ENCODE measurements at regions of chr22 and their contacts with region 1.

Region 1: GRCh38 chr22:23315341-23315917 is 135.1 kb downstream of the BCR start:
- DNase-seq: peak; percentile 23
- ATAC-seq: peak; percentile 71
- H3K4me3 ChIP-seq: no peak overlapping the region
- H3K27ac ChIP-seq: no peak overlapping the region
- H3K4me1 ChIP-seq: no peaks in the 10 kb centered on the region
- H3K27me3 ChIP-seq: no peaks in the 10 kb centered on the region
- CTCF ChIP-seq: peak; percentile 49 to 62 (median 58); a peak in 5 of 6 replicates
- POLR2A ChIP-seq: no peak
- RAD21 ChIP-seq: peak; percentile 63

Region 2: GRCh38 chr22:23385291-23386244 is 70.1 kb after region 1 on chr22:
- CTCF ChIA-PET with region 1: interaction called, 12 read pairs
- POLR2A ChIA-PET with region 1: no interaction called
- RAD21 ChIA-PET with region 1: interaction called in 1 of 2 experiments, 3 read pairs
- intact Hi-C with region 1: loop called (anchors 1 kb)
- DNase-seq: peak; percentile 61
- ATAC-seq: peak; percentile 95
- H3K4me3 ChIP-seq: no peak overlapping the region
- H3K27ac ChIP-seq: no peak overlapping the region; the same call in 1 of the 2 replicates
- H3K4me1 ChIP-seq: no peaks in the 10 kb centered on the region
- H3K27me3 ChIP-seq: no peaks in the 10 kb centered on the region
- CTCF ChIP-seq: peak; percentile 94 to 98 (median 96)
- POLR2A ChIP-seq: no peak
- RAD21 ChIP-seq: peak; percentile 93

Region 3: GRCh38 chr22:23404732-23405365 is 89.4 kb after region 1 on chr22:
- CTCF ChIA-PET with region 1: no interaction called
- POLR2A ChIA-PET with region 1: no interaction called
- RAD21 ChIA-PET with region 1: no interaction called
- intact Hi-C with region 1: no loop called
- DNase-seq: no peak
- ATAC-seq: no peak
- H3K4me3 ChIP-seq: no peak overlapping the region
- H3K27ac ChIP-seq: no peak overlapping the region
- H3K4me1 ChIP-seq: peaks cover 11 to 17% of the 10 kb centered on the region in 2 experiments; a peak in 3 of 4 replicates
- H3K27me3 ChIP-seq: peaks cover 3% of the 10 kb centered on the region; the same call in 1 of the 2 replicates
- CTCF ChIP-seq: no peak
- POLR2A ChIP-seq: no peak
- RAD21 ChIP-seq: no peak

Region 4: DNA sequence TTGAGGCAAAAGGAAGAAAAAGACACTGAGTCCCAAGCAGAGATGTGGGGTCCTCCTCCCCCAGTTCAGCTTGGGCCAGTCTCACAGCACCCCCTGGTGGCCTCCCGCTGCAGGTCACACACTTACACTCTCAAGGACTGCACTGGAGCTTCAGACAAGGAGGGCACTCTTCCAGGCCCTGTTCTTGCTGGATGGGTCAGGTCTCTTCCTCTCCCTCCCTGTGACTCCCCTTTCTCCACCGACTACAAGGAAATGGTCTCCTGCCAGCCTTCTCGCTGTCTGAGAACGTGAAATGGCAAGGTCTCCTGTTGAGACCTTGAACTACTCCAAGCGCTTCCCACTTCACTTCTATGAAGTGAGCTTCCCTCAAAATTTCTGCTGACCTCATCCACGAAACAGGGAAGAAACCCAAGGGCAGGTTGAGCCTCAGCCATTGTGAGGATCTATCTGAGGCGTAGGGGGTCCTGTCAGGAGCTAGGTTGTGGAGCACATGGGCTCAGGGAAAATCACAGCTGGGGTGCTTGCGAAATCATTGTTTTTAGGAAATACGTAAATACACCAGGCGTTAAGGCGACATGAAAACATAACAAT is 275.9 kb after region 1 on chr22:
- CTCF ChIA-PET with region 1: no interaction called
- POLR2A ChIA-PET with region 1: no interaction called
- RAD21 ChIA-PET with region 1: no interaction called
- intact Hi-C with region 1: loop called (anchors 5 kb)
- DNase-seq: peak; percentile 51
- ATAC-seq: peak; percentile 97
- H3K4me3 ChIP-seq: no peak overlapping the region
- H3K27ac ChIP-seq: no peak overlapping the region
- H3K4me1 ChIP-seq: no peaks in the 10 kb centered on the region
- H3K27me3 ChIP-seq: no peaks in the 10 kb centered on the region; the same call in 1 of the 2 replicates
- CTCF ChIP-seq: peak; percentile 72 to 95 (median 94)
- POLR2A ChIP-seq: no peak
- RAD21 ChIP-seq: peak; percentile 75

Region 5: GRCh38 chr22:23849009-23850006 is 533.9 kb after region 1 on chr22:
- CTCF ChIA-PET with region 1: no interaction called
- POLR2A ChIA-PET with region 1: no interaction called
- RAD21 ChIA-PET with region 1: no interaction called
- intact Hi-C with region 1: loop called (anchors 10 kb)
- DNase-seq: peak; percentile 41
- ATAC-seq: peak; percentile 91
- H3K4me3 ChIP-seq: peak overlapping the region in 1 of 2 experiments; percentile 8; a peak in 1 of 4 replicates
- H3K27ac ChIP-seq: no peak overlapping the region; the same call in 1 of the 2 replicates
- H3K4me1 ChIP-seq: peaks cover 2 to 12% of the 10 kb centered on the region in 2 experiments; a peak in 2 of 4 replicates
- H3K27me3 ChIP-seq: no peaks in the 10 kb centered on the region
- CTCF ChIP-seq: peak; percentile 90 to 98 (median 94)
- POLR2A ChIP-seq: no peak
- RAD21 ChIP-seq: peak; percentile 98